ENCODE measurements at regions of chr14 and their contacts with region 1.

Region 1: DNA sequence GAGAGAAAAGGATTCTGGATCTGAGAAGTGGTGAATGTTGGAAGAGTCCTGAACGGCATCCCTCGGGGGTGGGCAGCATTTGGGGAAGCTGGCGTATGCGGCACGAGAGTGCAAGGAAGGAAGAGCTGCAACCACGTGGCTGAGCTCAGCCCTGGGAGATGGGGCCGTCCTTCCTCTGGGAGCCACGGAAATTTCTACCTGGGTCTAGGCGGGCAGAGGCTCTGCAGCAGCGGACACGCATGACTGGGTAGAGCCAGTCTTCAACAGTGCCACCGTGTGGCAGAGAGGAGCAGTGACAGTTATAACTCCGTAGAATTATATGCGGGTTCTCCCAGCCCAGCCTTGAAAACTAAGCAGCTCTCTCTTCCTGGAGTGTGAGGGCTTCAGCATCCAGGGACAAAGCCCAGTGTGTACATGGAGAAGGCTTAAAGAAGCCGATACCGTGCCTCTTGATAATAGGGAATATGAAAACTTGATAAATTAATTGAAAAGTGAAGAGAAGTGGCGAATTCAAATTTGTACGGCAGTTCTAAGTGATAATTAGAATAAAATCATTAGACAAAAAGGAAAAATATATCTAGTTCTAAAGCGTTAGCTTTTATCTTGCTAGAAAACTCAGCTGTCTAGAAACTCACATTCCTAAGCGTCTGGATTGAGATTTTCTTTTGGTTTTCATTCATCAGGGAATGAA is 82.9 kb upstream of the STXBP6 start:
- DNase-seq: peak; percentile 76
- H3K4me3 Mint-ChIP-seq: peak overlapping the region; percentile 61
- H3K27ac Mint-ChIP-seq: peak overlapping the region; percentile 55
- H3K4me1 Mint-ChIP-seq: peaks cover 18% of the 10 kb centered on the region
- H3K27me3 Mint-ChIP-seq: peaks cover 12% of the 10 kb centered on the region
- CTCF ChIP-seq: peak; percentile 65

Region 2: DNA sequence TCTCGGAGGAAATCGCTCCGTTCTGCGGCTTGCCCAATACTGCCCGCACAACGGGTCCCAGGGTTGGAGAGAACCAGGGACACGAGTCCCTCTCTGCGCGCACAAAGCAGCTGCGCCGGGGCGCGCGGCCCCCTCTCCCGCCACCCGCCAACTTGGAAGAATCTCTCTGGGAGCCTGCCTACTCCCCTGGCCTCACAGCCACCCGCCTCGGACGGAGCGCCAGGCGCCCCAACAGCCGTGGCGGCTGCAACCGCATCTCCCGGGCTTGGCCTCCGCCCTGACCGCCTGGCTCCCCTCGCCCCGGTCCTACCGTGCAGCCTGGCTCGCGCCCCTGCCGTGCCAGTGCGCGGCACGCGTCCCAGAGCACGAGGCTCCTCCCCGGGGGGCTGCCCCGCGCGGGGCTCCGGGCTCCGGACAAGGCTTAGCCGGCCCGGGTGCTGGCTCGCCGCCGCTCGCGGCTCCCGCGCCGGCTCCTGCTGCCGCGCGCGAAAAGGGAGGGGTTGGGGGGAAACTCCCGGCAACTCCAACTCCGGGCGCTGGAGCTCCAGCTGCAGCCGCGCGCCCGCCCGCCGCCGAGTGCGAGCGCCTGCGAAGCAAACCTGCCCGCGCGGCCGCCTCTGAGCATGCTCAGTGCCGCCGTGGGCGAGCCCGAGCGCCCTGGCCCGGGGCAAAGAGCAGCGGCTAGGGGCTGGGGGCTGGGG is 83.2 kb before region 1 on chr14 and contains the start of gene STXBP6:
- CTCF ChIA-PET with region 1: interaction called, 3 read pairs
- intact Hi-C with region 1: loop called (anchors 5 kb)
- DNase-seq: peak; percentile 73
- H3K4me3 Mint-ChIP-seq: peak within 1 kb of the TSS; percentile 75
- H3K27ac Mint-ChIP-seq: peak within 1 kb of the TSS; percentile 34
- H3K4me1 Mint-ChIP-seq: peaks cover 8% of the 10 kb centered on the region
- H3K27me3 Mint-ChIP-seq: no peaks in the 10 kb centered on the region
- CTCF ChIP-seq: no peak
- total RNA-seq, gene STXBP6: 6.4 and 7.9 TPM in 2 replicates

Region 3: GRCh38 chr14:25069879-25070278 is 63.0 kb before region 1 on chr14:
- CTCF ChIA-PET with region 1: no interaction called
- intact Hi-C with region 1: loop called (anchors 2 kb)
- DNase-seq: no peak
- H3K4me3 Mint-ChIP-seq: no peak overlapping the region
- H3K27ac Mint-ChIP-seq: no peak overlapping the region
- H3K4me1 Mint-ChIP-seq: peaks cover 16% of the 10 kb centered on the region
- H3K27me3 Mint-ChIP-seq: no peaks in the 10 kb centered on the region
- CTCF ChIP-seq: no peak